Sciatic nerve (tissue), 2 donors: ENCODE measurements at regions of chr15 and their contacts with region 1.

Region 1: DNA sequence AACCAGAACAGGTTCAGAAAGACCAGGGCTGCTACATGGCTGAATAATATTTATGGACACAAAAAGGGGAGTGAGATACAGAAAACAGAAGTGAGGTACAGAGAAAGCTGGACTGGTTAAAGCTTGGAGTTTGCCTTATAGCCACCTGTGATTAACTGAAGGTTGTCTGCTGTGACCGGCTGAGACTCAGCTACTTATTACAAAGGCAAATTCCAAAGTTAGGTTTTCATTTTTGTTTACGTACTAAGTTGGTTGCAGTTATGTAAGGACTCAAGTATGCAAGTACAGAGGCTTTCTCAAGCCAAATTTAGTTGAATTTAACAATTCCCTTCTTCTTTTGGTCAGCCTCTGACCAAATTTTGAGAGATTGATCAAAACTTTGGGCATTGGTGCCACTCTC is 264.6 kb downstream of the THSD4 start:
- DNase-seq: no peak
- ATAC-seq: no peak

Region 2: GRCh38 chr15:71282076-71282475 is 97.8 kb before region 1 on chr15:
- intact Hi-C with region 1: no loop called
- DNase-seq: no peak
- ATAC-seq: peak; percentile 57

Region 3: GRCh38 chr15:71888797-71889196 is 508.9 kb after region 1 on chr15:
- intact Hi-C with region 1: loop called (anchors 5 kb)
- DNase-seq: no peak
- ATAC-seq: no peak

Region 4: DNA sequence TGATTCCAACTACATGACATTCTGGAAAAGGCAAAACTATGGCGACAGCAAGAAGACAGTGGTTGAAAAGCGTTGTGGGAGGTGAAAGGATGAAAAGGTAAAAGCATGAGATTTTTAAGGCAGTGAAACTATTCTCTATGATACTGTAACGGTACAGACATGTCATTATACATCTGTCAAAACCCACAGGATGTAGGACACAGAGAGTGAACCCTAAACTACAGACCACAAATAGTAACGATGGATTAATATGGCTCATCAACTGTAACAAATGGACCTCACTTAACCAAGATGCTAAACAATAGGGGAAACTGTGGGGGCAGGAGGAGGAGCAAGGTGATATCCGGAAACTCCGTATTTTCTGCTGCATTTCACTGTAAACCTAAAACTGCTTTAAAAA is 699.0 kb after region 1 on chr15:
- intact Hi-C with region 1: no loop called
- DNase-seq: no peak
- ATAC-seq: no peak